Activated B cell treated with CpG ODN at 0.5 μM for 24 hours (primary cell): ENCODE measurements at regions of chrX and their contacts with region 1.

Region 1: GRCh38 chrX:123833387-123833786 is 26.5 kb upstream of the XIAP start:
- DNase-seq: peak; percentile 16
- ATAC-seq: peak; percentile 63
- H3K4me3 Mint-ChIP-seq: no peak overlapping the region
- H3K27ac Mint-ChIP-seq: no peak overlapping the region
- H3K4me1 Mint-ChIP-seq: peaks cover 20% of the 10 kb centered on the region
- H3K27me3 Mint-ChIP-seq: no peaks in the 10 kb centered on the region
- CTCF ChIP-seq: no peak

Region 2: DNA sequence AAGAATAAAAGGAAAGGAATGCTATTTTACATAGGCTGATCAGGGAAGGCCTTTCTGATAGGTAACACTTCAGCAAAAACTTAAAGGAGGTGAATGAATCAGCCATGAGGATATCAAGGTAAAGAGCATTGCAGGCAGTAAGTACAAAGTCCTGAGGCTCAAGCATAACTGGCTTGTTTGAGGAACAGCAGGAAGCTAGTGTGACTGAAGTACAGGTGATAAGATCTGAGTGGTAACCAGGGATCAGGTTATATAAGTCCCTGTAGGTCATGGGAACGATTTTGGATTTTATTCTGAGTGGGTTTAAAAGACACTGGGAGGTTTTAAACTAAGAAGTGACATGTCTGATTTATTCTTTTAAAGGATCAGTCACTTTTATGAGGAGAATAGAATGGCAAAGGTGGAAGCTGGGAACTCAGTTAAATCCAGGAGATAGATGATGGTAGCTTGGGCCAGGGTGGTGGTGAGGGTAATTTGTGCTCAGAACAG is 53.4 kb before region 1 on chrX:
- CTCF ChIA-PET with region 1: no interaction called
- POLR2A ChIA-PET with region 1: no interaction called
- intact Hi-C with region 1: loop called (anchors 1 kb)
- DNase-seq: no peak
- ATAC-seq: no peak
- H3K4me3 Mint-ChIP-seq: no peak overlapping the region
- H3K27ac Mint-ChIP-seq: no peak overlapping the region
- H3K4me1 Mint-ChIP-seq: peaks cover 5% of the 10 kb centered on the region
- H3K27me3 Mint-ChIP-seq: no peaks in the 10 kb centered on the region
- CTCF ChIP-seq: no peak

Region 3: DNA sequence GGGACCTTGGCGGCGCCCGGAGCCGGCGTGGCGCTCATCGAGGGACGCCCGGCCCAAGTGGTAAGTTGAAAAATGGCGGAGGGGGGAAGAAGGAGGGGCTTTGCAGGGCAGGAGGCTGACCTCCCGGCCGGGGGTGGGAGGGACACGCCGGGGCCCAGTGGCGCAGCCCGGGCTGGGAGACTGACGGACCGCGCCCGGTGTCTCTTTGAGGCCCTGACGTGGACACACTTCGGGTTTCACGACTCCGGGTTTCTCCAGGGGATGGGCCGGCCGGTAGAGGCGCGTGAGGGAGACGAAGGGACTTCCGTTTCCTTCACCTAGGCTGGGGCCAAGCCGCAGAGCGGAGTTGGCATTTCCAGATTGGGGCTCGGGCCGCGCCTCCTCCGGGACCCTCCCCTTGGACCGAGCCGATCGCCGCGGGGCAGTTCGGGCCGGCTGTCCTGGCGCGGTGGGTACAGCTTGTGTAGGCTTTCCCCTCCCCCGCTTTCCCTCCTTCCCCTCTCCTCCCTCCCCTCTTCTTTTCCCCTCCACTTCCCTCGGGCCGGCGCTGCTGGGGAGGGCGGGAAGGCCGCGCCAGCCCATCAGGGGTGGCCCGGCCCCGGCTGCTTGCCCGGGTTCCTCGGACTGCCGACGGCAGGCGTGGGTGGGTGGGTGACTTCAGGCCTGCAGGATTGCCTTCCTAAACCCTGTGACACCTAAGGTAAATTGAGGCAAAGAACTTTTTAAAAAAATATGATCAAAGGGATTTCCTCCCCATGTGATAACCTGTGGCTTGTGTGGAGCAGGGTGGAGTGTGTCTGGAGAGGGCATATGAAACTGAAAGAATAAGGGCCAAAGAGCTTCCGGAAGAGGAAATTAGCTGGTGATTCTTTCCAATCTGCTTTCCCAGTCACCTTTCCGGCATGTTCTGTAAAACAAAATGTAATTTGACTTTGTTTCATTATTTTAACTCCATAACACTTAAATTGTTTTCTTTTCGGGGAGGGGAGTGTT is 26.8 kb after region 1 on chrX and contains the start of gene XIAP:
- CTCF ChIA-PET with region 1: interaction called, 3 read pairs
- POLR2A ChIA-PET with region 1: interaction called, 11 read pairs
- intact Hi-C with region 1: loop called (anchors 2 kb)
- DNase-seq: peak; percentile 69
- ATAC-seq: peak; percentile 82
- H3K4me3 Mint-ChIP-seq: peak within 1 kb of the TSS; percentile 89
- H3K27ac Mint-ChIP-seq: peak within 1 kb of the TSS; percentile 88
- H3K4me1 Mint-ChIP-seq: peaks cover 19% of the 10 kb centered on the region
- H3K27me3 Mint-ChIP-seq: no peaks in the 10 kb centered on the region
- CTCF ChIP-seq: no peak
- total RNA-seq, gene XIAP: 32.0 and 43.6 TPM in 2 replicates

Region 4: GRCh38 chrX:123884809-123885408 is 51.5 kb after region 1 on chrX:
- CTCF ChIA-PET with region 1: interaction called, 4 read pairs
- POLR2A ChIA-PET with region 1: no interaction called
- intact Hi-C with region 1: loop called (anchors 1 kb)
- DNase-seq: no peak
- ATAC-seq: peak; percentile 42
- H3K4me3 Mint-ChIP-seq: no peak overlapping the region
- H3K27ac Mint-ChIP-seq: no peak overlapping the region
- H3K4me1 Mint-ChIP-seq: peaks cover 11% of the 10 kb centered on the region
- H3K27me3 Mint-ChIP-seq: no peaks in the 10 kb centered on the region
- CTCF ChIP-seq: no peak

Region 5: GRCh38 chrX:124018023-124018422 is 184.6 kb after region 1 on chrX:
- CTCF ChIA-PET with region 1: interaction called, 6 read pairs
- POLR2A ChIA-PET with region 1: interaction called, 7 read pairs
- intact Hi-C with region 1: loop called (anchors 1 kb)
- DNase-seq: no peak
- ATAC-seq: no peak
- H3K4me3 Mint-ChIP-seq: no peak overlapping the region
- H3K27ac Mint-ChIP-seq: no peak overlapping the region
- H3K4me1 Mint-ChIP-seq: peaks cover 32% of the 10 kb centered on the region
- H3K27me3 Mint-ChIP-seq: no peaks in the 10 kb centered on the region
- CTCF ChIP-seq: no peak

Region 6: DNA sequence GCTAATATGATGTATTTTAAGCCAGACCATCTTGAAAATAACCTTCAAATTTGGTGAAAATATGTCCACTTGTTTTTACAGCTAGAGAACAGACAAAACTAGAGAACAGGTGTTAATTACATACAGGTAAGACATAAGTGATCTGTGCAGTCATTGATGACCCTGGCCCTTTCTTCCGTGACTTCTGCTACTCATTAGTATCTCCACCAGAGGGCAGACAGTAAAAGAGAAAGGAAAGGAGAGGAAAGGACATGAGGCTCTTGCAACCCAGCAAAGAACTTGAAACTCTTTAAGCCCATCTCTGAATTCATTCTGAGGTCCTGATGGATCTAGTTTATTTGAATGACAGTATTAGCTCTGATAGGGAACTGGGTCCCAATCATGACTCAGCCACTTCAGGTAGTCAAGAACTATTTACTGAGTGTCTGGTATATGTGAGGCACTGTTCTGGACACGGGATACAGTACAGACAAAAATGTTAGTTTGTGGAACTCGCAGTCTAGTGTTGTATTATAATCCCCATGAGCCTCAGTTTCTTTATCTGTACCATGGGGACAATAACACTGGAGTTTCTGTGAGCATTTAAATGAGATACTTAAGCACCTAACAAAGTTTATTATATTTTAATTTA is 378.0 kb after region 1 on chrX:
- CTCF ChIA-PET with region 1: no interaction called
- POLR2A ChIA-PET with region 1: no interaction called
- intact Hi-C with region 1: loop called (anchors 10 kb)
- DNase-seq: no peak
- ATAC-seq: no peak
- H3K4me3 Mint-ChIP-seq: no peak overlapping the region
- H3K27ac Mint-ChIP-seq: no peak overlapping the region
- H3K4me1 Mint-ChIP-seq: peaks cover 15% of the 10 kb centered on the region
- H3K27me3 Mint-ChIP-seq: peaks cover 1% of the 10 kb centered on the region
- CTCF ChIP-seq: no peak

Region 7: GRCh38 chrX:124504111-124504983 is 671.0 kb after region 1 on chrX:
- CTCF ChIA-PET with region 1: no interaction called
- POLR2A ChIA-PET with region 1: no interaction called
- intact Hi-C with region 1: no loop called
- DNase-seq: no peak
- ATAC-seq: no peak
- H3K4me3 Mint-ChIP-seq: no peak overlapping the region
- H3K27ac Mint-ChIP-seq: no peak overlapping the region
- H3K4me1 Mint-ChIP-seq: no peaks in the 10 kb centered on the region
- H3K27me3 Mint-ChIP-seq: no peaks in the 10 kb centered on the region
- CTCF ChIP-seq: no peak